WTC11 (cell line): ENCODE measurements at regions of chr3 and their contacts with region 1.

Region 1: GRCh38 chr3:192772240-192772894 is 45.0 kb upstream of the FGF12 start:
- DNase-seq: peak; percentile 61
- ATAC-seq: peak; percentile 100
- H3K4me3 Mint-ChIP-seq: no peak overlapping the region
- H3K27ac Mint-ChIP-seq: no peak overlapping the region
- H3K4me1 Mint-ChIP-seq: no peaks in the 10 kb centered on the region
- H3K27me3 Mint-ChIP-seq: peaks cover 4% of the 10 kb centered on the region
- CTCF ChIP-seq: peak; percentile 44

Region 2: GRCh38 chr3:192566706-192567290 is 205.6 kb before region 1 on chr3:
- CTCF ChIA-PET with region 1: interaction called, 13 read pairs
- POLR2A ChIA-PET with region 1: no interaction called
- DNase-seq: peak; percentile 76
- ATAC-seq: peak; percentile 87
- H3K4me3 Mint-ChIP-seq: no peak overlapping the region
- H3K27ac Mint-ChIP-seq: no peak overlapping the region
- H3K4me1 Mint-ChIP-seq: no peaks in the 10 kb centered on the region
- H3K27me3 Mint-ChIP-seq: no peaks in the 10 kb centered on the region; the same call in 1 of the 2 replicates
- CTCF ChIP-seq: peak; percentile 65; the same call in 1 of the 2 replicates

Region 3: GRCh38 chr3:192687488-192688152 is 84.7 kb before region 1 on chr3:
- CTCF ChIA-PET with region 1: no interaction called
- POLR2A ChIA-PET with region 1: no interaction called
- DNase-seq: no peak
- ATAC-seq: no peak
- H3K4me3 Mint-ChIP-seq: no peak overlapping the region
- H3K27ac Mint-ChIP-seq: no peak overlapping the region; the same call in 1 of the 2 replicates
- H3K4me1 Mint-ChIP-seq: no peaks in the 10 kb centered on the region
- H3K27me3 Mint-ChIP-seq: no peaks in the 10 kb centered on the region
- CTCF ChIP-seq: no peak

Region 4: DNA sequence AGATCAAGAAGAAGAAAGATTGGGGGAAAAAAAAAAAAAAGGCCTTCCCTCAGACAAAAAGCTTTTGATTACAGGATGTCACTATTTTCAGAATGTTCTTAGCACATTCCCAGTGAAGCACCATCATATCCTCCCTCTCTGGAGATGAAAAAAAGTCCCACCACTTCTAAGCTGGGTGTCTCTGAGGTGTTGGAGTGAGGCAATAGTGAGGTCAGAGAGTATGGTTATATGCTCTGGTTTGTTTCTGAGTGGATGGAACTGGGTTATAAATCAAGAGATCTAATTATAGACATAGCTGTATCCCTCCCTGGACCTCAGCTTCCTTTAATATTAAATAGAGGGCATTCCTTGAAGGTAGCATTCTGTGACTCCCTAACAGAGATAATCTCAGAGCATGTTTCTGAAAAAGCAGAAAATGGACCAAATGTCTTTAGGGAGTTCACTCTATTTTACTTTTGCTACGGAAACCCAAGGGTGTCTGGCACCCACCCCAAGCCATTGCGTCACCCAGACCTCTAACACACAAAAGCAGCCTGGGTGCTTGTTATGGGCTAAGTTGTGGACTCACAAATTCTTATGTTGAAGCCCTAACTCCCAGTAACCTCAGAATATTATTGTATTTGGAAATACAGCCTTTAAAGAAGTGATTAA is 63.6 kb after region 1 on chr3:
- CTCF ChIA-PET with region 1: no interaction called
- POLR2A ChIA-PET with region 1: no interaction called
- DNase-seq: no peak
- ATAC-seq: no peak
- H3K4me3 Mint-ChIP-seq: no peak overlapping the region
- H3K27ac Mint-ChIP-seq: peak overlapping the region; percentile 75
- H3K4me1 Mint-ChIP-seq: peaks cover 65% of the 10 kb centered on the region
- H3K27me3 Mint-ChIP-seq: no peaks in the 10 kb centered on the region
- CTCF ChIP-seq: no peak